ENCODE measurements at regions of chr15 and their contacts with region 1.

Region 1: DNA sequence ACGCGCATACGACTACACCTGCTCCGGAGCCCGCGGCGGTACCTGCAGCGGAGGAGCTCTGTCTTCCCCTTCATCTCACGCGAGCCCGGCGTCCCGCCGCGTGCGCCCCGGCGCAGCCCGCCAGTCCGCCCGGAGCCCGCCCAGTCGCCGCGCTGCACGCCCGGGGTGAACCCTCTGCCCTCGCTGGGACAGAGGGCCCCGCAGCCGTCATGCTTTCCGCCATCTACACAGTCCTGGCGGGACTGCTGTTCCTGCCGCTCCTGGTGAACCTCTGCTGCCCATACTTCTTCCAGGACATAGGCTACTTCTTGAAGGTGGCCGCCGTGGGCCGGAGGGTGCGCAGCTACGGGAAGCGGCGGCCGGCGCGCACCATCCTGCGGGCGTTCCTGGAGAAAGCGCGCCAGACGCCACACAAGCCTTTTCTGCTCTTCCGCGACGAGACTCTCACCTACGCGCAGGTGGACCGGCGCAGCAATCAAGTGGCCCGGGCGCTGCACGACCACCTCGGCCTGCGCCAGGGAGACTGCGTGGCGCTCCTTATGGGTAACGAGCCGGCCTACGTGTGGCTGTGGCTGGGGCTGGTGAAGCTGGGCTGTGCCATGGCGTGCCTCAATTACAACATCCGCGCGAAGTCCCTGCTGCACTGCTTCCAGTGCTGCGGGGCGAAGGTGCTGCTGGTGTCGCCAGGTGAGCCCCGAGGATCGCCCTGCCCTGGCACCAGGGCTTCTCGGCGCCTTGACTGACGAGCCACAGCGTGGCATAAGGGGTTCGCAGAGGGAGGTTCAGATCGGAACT is 420 bp downstream of the SLC27A2 start:
- DNase-seq: peak; percentile 30 to 67
- ATAC-seq: peak; percentile 52 to 73 (median 68)
- H3K4me3 ChIP-seq: peak overlapping the region; percentile 47
- H3K4me3 Mint-ChIP-seq: peak overlapping the region; percentile 93
- H3K27ac ChIP-seq: no peak overlapping the region
- H3K27ac Mint-ChIP-seq: peak overlapping the region in 1 of 2 donors; percentile 81
- H3K4me1 ChIP-seq: peaks cover 20% of the 10 kb centered on the region
- H3K4me1 Mint-ChIP-seq: peaks cover 14 to 20% of the 10 kb centered on the region in 2 donors
- H3K27me3 ChIP-seq: no peaks in the 10 kb centered on the region
- H3K27me3 Mint-ChIP-seq: peaks cover 17 to 34% of the 10 kb centered on the region in 2 donors
- CTCF ChIP-seq: peak; percentile 5

Region 2: GRCh38 chr15:50219820-50220219 is 37.4 kb after region 1 on chr15:
- intact Hi-C with region 1: no loop called
- DNase-seq: no peak
- ATAC-seq: no peak
- H3K4me3 ChIP-seq: no peak overlapping the region
- H3K4me3 Mint-ChIP-seq: no peak overlapping the region
- H3K27ac ChIP-seq: no peak overlapping the region
- H3K27ac Mint-ChIP-seq: no peak overlapping the region
- H3K4me1 ChIP-seq: no peaks in the 10 kb centered on the region
- H3K4me1 Mint-ChIP-seq: no peaks in the 10 kb centered on the region
- H3K27me3 ChIP-seq: no peaks in the 10 kb centered on the region
- H3K27me3 Mint-ChIP-seq: no peaks in the 10 kb centered on the region
- CTCF ChIP-seq: no peak

Region 3: DNA sequence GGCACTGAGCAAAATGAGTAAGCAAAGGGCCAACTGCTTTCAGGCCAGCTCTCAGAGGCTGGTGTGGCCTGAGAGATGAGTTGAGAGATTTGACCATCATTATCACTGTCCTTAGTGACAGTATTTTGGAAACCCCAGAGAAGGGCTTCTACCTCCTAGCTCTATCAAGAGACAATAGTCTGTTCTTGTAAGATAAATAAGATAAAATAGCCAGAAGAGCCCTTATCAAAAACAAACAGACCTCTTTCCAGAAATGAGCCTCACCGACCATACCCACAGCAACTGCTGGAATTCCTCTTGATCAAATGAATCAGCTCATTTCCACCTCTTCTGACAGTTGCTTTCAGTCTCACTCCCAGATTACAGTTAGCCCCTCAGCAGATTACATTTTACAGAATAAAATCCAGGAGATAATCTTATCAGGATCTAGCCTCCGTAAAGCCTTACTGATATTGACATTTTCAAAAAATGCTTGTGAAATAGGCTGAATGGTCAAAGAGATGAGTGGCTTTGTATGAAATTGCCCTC is 78.6 kb after region 1 on chr15:
- intact Hi-C with region 1: loop called (anchors 5 kb)
- DNase-seq: no peak
- ATAC-seq: peak in 2 of 3 donors; percentile 3 to 64
- H3K4me3 ChIP-seq: no peak overlapping the region
- H3K4me3 Mint-ChIP-seq: peak overlapping the region; percentile 72
- H3K27ac ChIP-seq: no peak overlapping the region
- H3K27ac Mint-ChIP-seq: peak overlapping the region; percentile 86 to 88
- H3K4me1 ChIP-seq: peaks cover 47% of the 10 kb centered on the region
- H3K4me1 Mint-ChIP-seq: peaks cover 40 to 42% of the 10 kb centered on the region in 2 donors
- H3K27me3 ChIP-seq: no peaks in the 10 kb centered on the region
- H3K27me3 Mint-ChIP-seq: no peaks in the 10 kb centered on the region
- CTCF ChIP-seq: no peak

Region 4: DNA sequence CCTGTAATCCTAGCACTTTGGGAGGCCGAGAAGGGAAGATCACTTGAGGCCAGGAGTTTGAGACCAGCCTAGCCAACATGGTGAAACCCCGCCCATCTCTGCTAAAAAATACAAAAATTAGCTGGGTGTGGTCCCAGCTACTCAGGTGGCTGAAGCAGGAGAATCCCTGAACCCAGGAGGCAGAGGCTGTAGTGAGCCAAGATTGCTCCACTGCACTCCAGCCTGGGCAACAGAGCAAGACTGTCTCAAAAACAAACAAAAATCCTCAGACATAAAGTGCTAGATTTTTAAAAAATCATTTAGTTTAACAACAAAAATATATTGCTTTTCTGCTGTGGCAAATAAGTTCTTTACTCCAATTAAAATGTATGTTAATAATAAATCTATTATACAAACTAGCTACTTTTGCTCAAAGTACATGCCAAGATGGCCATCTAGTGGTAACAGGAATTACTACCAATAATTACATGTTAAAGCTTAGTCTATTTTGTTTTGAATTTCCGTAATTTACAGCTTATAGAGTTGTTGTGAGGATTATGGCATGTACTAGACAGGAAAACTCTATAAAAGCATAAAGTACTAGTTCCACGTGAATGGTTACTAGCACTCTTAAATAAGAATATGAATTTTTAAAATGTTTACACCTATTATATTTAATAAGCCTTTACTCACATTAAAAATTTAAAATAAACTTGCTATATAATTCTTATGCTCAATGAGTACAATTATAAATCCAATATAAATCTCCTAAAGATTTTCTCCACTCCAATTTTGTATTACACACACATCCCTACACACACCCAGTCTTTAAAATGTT is 133.6 kb after region 1 on chr15:
- intact Hi-C with region 1: loop called (anchors 1 kb)
- DNase-seq: peak in 1 of 2 donors; percentile 70
- ATAC-seq: peak; percentile 63 to 69 (median 65)
- H3K4me3 ChIP-seq: no peak overlapping the region
- H3K4me3 Mint-ChIP-seq: no peak overlapping the region
- H3K27ac ChIP-seq: no peak overlapping the region
- H3K27ac Mint-ChIP-seq: no peak overlapping the region
- H3K4me1 ChIP-seq: peaks cover 3% of the 10 kb centered on the region
- H3K4me1 Mint-ChIP-seq: peaks cover 13 to 21% of the 10 kb centered on the region in 2 donors
- H3K27me3 ChIP-seq: no peaks in the 10 kb centered on the region
- H3K27me3 Mint-ChIP-seq: no peaks in the 10 kb centered on the region
- CTCF ChIP-seq: peak; percentile 80